ENCODE measurements at regions of chr11 and their contacts with region 1.

Region 1: GRCh38 chr11:7892840-7893254 is 38.2 kb downstream of the OR10A6 start:
- DNase-seq: no peak
- H3K4me3 ChIP-seq: no peak overlapping the region
- H3K27ac ChIP-seq: no peak overlapping the region
- H3K4me1 ChIP-seq: 0 out of 7 replicates have a peak, but pooled peaks cover 0 to 2% (median 0%) of the 10 kb centered on the region in 4 experiments
- H3K27me3 ChIP-seq: peaks cover 0 to 1% (median 0%) of the 10 kb centered on the region in 4 experiments; a peak in 2 of 7 replicates
- CTCF ChIP-seq: peak in 2 of 3 experiments; percentile 57 to 70; a peak in 3 of 4 replicates
- EP300 ChIP-seq: no peak
- POLR2A ChIP-seq: no peak
- RAD21 ChIP-seq: peak; percentile 75 to 84

Region 2: GRCh38 chr11:7858006-7858405 is 34.8 kb before region 1 on chr11:
- CTCF ChIA-PET with region 1: no interaction called
- POLR2A ChIA-PET with region 1: no interaction called
- DNase-seq: no peak
- H3K4me3 ChIP-seq: no peak overlapping the region
- H3K27ac ChIP-seq: no peak overlapping the region
- H3K4me1 ChIP-seq: no peaks in the 10 kb centered on the region
- H3K27me3 ChIP-seq: no peaks in the 10 kb centered on the region
- CTCF ChIP-seq: no peak
- EP300 ChIP-seq: no peak
- POLR2A ChIP-seq: no peak
- RAD21 ChIP-seq: no peak

Region 3: GRCh38 chr11:7871056-7871455 is 21.8 kb before region 1 on chr11:
- CTCF ChIA-PET with region 1: no interaction called
- POLR2A ChIA-PET with region 1: no interaction called
- DNase-seq: no peak
- H3K4me3 ChIP-seq: no peak overlapping the region
- H3K27ac ChIP-seq: no peak overlapping the region
- H3K4me1 ChIP-seq: no peaks in the 10 kb centered on the region
- H3K27me3 ChIP-seq: no peaks in the 10 kb centered on the region
- CTCF ChIP-seq: no peak
- EP300 ChIP-seq: no peak
- POLR2A ChIP-seq: no peak
- RAD21 ChIP-seq: no peak

Region 4: GRCh38 chr11:7904914-7905313 is 12.1 kb after region 1 on chr11:
- CTCF ChIA-PET with region 1: interaction called, 78 read pairs
- POLR2A ChIA-PET with region 1: interaction called, 9 read pairs
- DNase-seq: no peak
- H3K4me3 ChIP-seq: peak overlapping the region in 2 of 4 experiments; percentile 25 to 30; a peak in 1 of 8 replicates
- H3K27ac ChIP-seq: no peak overlapping the region
- H3K4me1 ChIP-seq: peaks cover 6 to 21% (median 16%) of the 10 kb centered on the region in 4 experiments
- H3K27me3 ChIP-seq: no peaks in the 10 kb centered on the region
- CTCF ChIP-seq: peak in 2 of 3 experiments; percentile 50 to 63; a peak in 3 of 4 replicates
- EP300 ChIP-seq: no peak
- POLR2A ChIP-seq: no peak
- RAD21 ChIP-seq: peak; percentile 69 to 73

Region 5: DNA sequence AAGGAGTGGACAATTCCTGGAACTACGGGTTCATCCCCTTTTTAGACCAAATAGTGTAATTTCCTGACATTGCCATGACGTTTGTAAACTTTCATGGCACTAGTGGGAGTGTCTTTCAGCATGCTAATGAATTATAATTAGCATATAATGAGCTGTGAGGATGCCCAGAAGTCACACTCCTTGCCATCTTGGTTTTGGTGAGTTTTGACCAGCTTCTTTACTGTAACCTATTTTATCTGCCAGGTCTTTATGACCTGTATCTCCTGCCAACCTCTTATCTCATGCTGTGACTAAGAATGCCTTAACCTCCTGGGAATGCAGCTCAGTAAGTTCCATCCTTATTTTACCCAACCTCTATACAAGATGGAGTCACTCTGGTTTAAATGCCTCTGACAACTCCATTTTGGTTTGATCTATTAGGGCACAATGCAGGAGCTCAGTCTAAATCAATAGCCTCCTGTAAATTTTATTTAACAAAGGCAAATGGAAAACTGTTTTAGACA is 17.5 kb after region 1 on chr11:
- CTCF ChIA-PET with region 1: interaction called, 78 read pairs
- POLR2A ChIA-PET with region 1: interaction called, 6 read pairs
- DNase-seq: no peak
- H3K4me3 ChIP-seq: no peak overlapping the region
- H3K27ac ChIP-seq: no peak overlapping the region
- H3K4me1 ChIP-seq: peaks cover 4 to 15% (median 11%) of the 10 kb centered on the region in 4 experiments; a peak in 6 of 7 replicates
- H3K27me3 ChIP-seq: no peaks in the 10 kb centered on the region
- CTCF ChIP-seq: no peak
- EP300 ChIP-seq: no peak
- POLR2A ChIP-seq: no peak
- RAD21 ChIP-seq: no peak

Region 6: DNA sequence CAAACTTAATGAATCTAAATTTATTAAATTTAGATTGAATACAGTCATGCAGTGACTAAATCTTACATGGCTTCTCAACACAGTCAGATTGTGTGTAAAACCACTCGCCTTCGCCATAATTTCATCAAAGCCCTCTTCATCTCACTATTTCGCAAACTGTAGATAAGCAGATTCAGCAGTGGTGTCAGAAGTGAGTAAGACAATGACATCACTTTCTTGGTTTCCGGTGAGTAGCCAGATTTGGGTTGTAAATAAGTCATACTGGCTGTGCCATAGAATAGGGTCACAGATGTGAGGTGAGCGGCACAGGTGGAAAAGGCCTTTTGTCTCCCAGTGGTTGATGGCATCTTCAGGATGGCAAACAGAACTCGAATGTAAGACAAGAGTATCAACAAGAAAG is 34.8 kb after region 1 on chr11:
- CTCF ChIA-PET with region 1: no interaction called
- POLR2A ChIA-PET with region 1: no interaction called
- DNase-seq: no peak
- H3K4me3 ChIP-seq: no peak overlapping the region
- H3K27ac ChIP-seq: no peak overlapping the region
- H3K4me1 ChIP-seq: no peaks in the 10 kb centered on the region
- H3K27me3 ChIP-seq: no peaks in the 10 kb centered on the region; a peak in 1 of 7 replicates
- CTCF ChIP-seq: no peak
- EP300 ChIP-seq: no peak
- POLR2A ChIP-seq: no peak
- RAD21 ChIP-seq: no peak

Region 7: DNA sequence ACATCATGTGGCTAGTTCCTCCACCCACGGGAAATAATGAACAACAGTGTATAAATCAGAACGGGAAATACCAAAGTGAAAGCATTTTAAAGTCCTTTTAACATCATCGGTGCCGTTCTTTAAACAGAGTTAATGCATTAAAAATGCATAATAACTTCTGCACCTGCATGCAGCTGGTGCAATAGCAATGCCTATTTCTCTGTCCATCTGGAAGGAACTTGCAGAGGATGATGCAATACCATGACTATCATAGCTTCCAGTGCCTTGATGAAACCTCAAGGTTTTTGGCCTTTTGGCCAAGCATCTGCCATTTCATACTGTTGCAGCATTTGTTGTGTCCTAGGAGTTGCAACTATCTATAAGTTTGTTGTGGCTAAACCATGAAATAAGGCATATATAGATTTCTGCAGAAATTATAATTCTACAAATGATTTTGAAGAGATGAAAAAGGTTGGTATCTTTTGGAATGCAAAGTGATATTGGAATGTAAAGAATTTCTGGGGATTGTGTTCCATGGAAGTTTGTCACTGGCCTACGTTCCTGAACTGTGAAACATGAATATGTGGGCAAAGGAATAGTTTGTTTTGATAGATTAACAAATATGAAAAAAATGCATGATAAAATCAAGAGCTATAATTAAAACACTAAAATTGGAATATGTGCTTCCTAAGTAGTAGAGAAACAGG is 84.5 kb after region 1 on chr11:
- CTCF ChIA-PET with region 1: interaction called, 106 read pairs
- POLR2A ChIA-PET with region 1: no interaction called
- DNase-seq: no peak
- H3K4me3 ChIP-seq: no peak overlapping the region
- H3K27ac ChIP-seq: no peak overlapping the region
- H3K4me1 ChIP-seq: peaks cover 0 to 4% (median 0%) of the 10 kb centered on the region in 4 experiments; a peak in 3 of 7 replicates
- H3K27me3 ChIP-seq: no peaks in the 10 kb centered on the region
- CTCF ChIP-seq: no peak
- EP300 ChIP-seq: no peak
- POLR2A ChIP-seq: no peak
- RAD21 ChIP-seq: no peak